Aorta (tissue), 5 donors: ENCODE measurements at regions of chr12 and their contacts with region 1.

Region 1: GRCh38 chr12:112900299-112901145 is 6.2 kb upstream of the OAS1 start:
- DNase-seq: no peak
- ATAC-seq: no peak
- H3K4me3 ChIP-seq: no peak overlapping the region
- H3K27ac ChIP-seq: no peak overlapping the region
- H3K4me1 ChIP-seq: peaks cover 0 to 2% of the 10 kb centered on the region in 2 donors
- H3K27me3 ChIP-seq: no peaks in the 10 kb centered on the region

Region 2: DNA sequence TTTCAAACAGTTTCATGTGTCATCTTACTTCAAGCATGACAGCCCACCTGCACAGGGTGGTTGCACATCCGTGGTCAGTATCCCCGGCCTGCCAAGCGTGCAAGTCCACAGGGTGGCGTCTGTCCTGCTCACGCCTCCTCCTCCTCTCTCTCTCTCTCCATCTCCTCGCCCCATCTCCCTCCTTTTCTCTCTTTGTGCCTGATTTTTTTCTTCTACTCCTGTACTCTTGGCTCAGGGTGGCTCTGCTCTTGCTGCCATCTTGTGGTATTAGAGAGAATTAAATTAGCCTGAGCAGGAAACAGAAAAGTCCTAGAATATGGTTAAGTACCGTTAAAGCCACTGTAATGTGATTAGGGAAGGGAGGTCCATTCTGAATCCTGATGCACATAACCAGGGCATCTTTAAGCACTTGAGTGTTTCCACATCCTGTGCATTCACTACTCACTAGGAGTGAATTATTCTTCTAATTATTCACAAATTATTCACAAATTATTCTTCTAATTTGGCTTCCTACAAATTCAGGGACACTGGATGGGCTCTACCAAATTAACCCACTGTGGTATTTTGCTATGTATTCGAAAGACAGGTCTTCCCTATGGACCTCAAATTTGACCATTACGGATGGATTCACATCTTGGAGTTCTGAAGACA is 130.5 kb after region 1 on chr12:
- intact Hi-C with region 1: loop called in 1 of 2 experiments (anchors 5 kb)
- DNase-seq: no peak
- ATAC-seq: peak; percentile 64
- H3K4me3 ChIP-seq: no peak overlapping the region
- H3K27ac ChIP-seq: no peak overlapping the region
- H3K4me1 ChIP-seq: no peaks in the 10 kb centered on the region
- H3K27me3 ChIP-seq: no peaks in the 10 kb centered on the region